AG04449 (cell line): ENCODE measurements at regions of chr1 and their contacts with region 1.

Region 1: GRCh38 chr1:155871390-155871789 is 12.0 kb downstream of the SYT11 start:
- DNase-seq: no peak
- H3K4me3 ChIP-seq: no peak overlapping the region
- CTCF ChIP-seq: no peak

Region 2: DNA sequence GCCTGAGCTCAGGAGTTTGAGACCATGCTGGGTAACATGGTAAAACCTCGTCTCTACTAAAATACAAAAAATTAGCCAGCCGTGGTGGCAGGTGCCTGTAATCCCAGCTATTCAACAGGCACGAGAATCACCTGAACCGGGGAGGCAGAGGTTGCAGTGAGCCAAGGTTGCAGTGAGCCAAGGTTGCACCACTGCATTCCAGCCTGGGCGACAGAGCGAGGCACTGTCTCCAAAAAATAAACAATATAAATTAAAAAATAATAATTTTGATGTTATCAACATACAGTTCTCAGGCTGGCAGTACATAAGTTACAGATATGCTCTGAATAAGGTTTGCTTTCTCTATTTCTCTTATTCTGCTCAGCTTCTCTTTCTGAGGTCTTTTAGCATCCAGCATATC is 42.0 kb before region 1 on chr1:
- CTCF ChIA-PET with region 1: no interaction called
- POLR2A ChIA-PET with region 1: no interaction called
- DNase-seq: no peak
- H3K4me3 ChIP-seq: no peak overlapping the region
- CTCF ChIP-seq: no peak

Region 3: DNA sequence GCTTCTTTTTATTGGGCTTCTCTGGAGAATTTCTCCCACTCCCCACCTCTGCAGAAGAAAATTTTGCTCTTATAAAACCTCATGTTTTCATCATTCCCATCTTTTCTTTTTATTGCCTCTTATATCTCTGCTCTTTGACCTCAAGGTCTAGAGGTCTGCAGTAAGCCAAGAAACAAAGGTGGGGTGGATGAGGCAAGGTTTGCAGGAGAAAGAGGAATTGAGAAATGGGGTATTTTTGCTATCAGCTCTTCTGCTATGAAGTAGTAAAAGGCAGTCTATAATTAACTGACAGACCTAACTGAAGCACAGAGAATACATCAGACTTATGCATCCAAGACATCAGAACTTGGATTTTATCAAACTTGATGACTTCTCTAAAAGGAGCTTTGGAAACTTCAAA is 10.8 kb after region 1 on chr1:
- CTCF ChIA-PET with region 1: interaction called, 13 read pairs
- POLR2A ChIA-PET with region 1: no interaction called
- DNase-seq: no peak
- H3K4me3 ChIP-seq: no peak overlapping the region
- CTCF ChIP-seq: no peak

Region 4: GRCh38 chr1:155951753-155952504 is 80.5 kb after region 1 on chr1:
- CTCF ChIA-PET with region 1: no interaction called
- POLR2A ChIA-PET with region 1: no interaction called
- DNase-seq: no peak
- H3K4me3 ChIP-seq: no peak overlapping the region
- CTCF ChIP-seq: no peak

Region 5: GRCh38 chr1:156082309-156083091 is 211.1 kb after region 1 on chr1 and contains the start of gene MEX3A:
- CTCF ChIA-PET with region 1: no interaction called
- POLR2A ChIA-PET with region 1: no interaction called
- DNase-seq: no peak
- H3K4me3 ChIP-seq: peak within 1 kb of the TSS; percentile 80
- CTCF ChIP-seq: no peak

Region 6: GRCh38 chr1:156129706-156130581 is 258.6 kb after region 1 on chr1:
- CTCF ChIA-PET with region 1: no interaction called
- POLR2A ChIA-PET with region 1: no interaction called
- DNase-seq: peak; percentile 80
- H3K4me3 ChIP-seq: peak overlapping the region; percentile 26
- CTCF ChIP-seq: peak; percentile 96